ENCODE measurements at regions of chr12 and their contacts with region 1.

Region 1: GRCh38 chr12:21438643-21439042 is 1.2 kb downstream of the PYROXD1 start:
- DNase-seq: no peak
- H3K4me3 Mint-ChIP-seq: peak overlapping the region; percentile 78
- H3K27ac Mint-ChIP-seq: peak overlapping the region; percentile 57
- H3K4me1 Mint-ChIP-seq: peaks cover 50% of the 10 kb centered on the region
- H3K27me3 Mint-ChIP-seq: no peaks in the 10 kb centered on the region
- CTCF ChIP-seq: no peak

Region 2: DNA sequence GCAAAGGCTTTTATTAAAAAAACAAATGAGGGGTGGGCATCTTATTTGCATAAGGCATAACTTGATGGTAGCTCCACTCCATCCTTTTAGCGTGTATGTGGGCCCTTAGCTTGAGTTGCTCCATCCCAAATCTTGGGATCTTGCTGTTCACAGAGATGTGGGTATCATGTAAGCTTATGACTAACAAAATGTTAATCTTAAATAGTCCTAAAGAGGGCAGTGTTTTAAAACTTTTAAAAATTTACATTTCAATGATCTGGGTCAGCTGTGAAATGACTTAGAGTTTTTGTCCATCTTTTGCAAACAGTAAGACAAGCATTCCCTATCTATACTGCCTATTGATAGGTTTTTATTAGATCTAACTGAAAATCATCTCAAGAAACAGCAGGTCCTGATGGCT is 190.0 kb before region 1 on chr12:
- CTCF ChIA-PET with region 1: interaction called, 4 read pairs
- intact Hi-C with region 1: loop called (anchors 5 kb)
- DNase-seq: no peak
- H3K4me3 Mint-ChIP-seq: no peak overlapping the region
- H3K27ac Mint-ChIP-seq: no peak overlapping the region
- H3K4me1 Mint-ChIP-seq: no peaks in the 10 kb centered on the region
- H3K27me3 Mint-ChIP-seq: no peaks in the 10 kb centered on the region
- CTCF ChIP-seq: no peak

Region 3: GRCh38 chr12:21296751-21297406 is 141.8 kb before region 1 on chr12:
- CTCF ChIA-PET with region 1: no interaction called
- intact Hi-C with region 1: loop called (anchors 5 kb)
- DNase-seq: peak; percentile 8
- H3K4me3 Mint-ChIP-seq: no peak overlapping the region
- H3K27ac Mint-ChIP-seq: no peak overlapping the region
- H3K4me1 Mint-ChIP-seq: no peaks in the 10 kb centered on the region
- H3K27me3 Mint-ChIP-seq: no peaks in the 10 kb centered on the region
- CTCF ChIP-seq: peak; percentile 57

Region 4: GRCh38 chr12:21451529-21451928 is 12.9 kb after region 1 on chr12:
- CTCF ChIA-PET with region 1: interaction called, 7 read pairs
- intact Hi-C with region 1: loop called (anchors 1 kb)
- DNase-seq: no peak
- H3K4me3 Mint-ChIP-seq: no peak overlapping the region
- H3K27ac Mint-ChIP-seq: no peak overlapping the region
- H3K4me1 Mint-ChIP-seq: no peaks in the 10 kb centered on the region
- H3K27me3 Mint-ChIP-seq: no peaks in the 10 kb centered on the region
- CTCF ChIP-seq: no peak

Region 5: DNA sequence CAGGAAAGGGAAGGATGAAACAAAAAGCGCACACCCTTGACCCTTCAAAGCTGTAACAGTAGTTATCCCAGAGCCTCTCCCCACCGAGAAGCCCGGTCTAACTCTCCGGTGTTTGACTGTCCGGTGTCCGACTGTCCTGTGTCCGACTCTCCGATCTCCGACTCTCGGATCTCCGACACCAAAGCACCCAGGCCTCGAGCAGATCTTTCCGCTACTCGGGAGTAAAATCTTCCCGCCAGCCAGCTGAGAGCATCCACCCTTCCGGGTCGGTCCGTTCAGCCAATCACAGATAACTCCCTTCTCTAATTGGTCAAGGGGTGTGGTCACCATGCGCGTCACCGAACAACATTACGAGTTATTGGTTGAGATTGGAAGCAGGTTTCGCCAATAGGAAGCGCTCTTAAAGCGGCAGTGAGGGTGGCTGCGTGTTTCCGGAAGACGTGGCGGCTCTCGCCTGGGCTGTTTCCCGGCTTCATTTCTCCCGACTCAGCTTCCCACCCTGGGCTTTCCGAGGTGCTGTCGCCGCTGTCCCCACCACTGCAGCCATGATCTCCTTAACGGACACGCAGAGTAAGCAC is 62.8 kb after region 1 on chr12 and contains the starts of genes GOLT1B and RECQL:
- CTCF ChIA-PET with region 1: no interaction called
- intact Hi-C with region 1: loop called (anchors 5 kb)
- DNase-seq: peak; percentile 90
- H3K4me3 Mint-ChIP-seq: no peak within 1 kb of the TSS
- H3K27ac Mint-ChIP-seq: no peak within 1 kb of the TSS
- H3K4me1 Mint-ChIP-seq: peaks cover 9% of the 10 kb centered on the region
- H3K27me3 Mint-ChIP-seq: no peaks in the 10 kb centered on the region
- CTCF ChIP-seq: no peak
- total RNA-seq, gene GOLT1B: 30.7 and 37.1 TPM in 2 replicates
- total RNA-seq, gene RECQL: 28.0 and 32.1 TPM in 2 replicates

Region 6: GRCh38 chr12:21642707-21643389 is 204.2 kb after region 1 on chr12:
- CTCF ChIA-PET with region 1: no interaction called
- intact Hi-C with region 1: loop called (anchors 10 kb)
- DNase-seq: no peak
- H3K4me3 Mint-ChIP-seq: no peak overlapping the region
- H3K27ac Mint-ChIP-seq: no peak overlapping the region
- H3K4me1 Mint-ChIP-seq: peaks cover 83% of the 10 kb centered on the region
- H3K27me3 Mint-ChIP-seq: no peaks in the 10 kb centered on the region
- CTCF ChIP-seq: no peak

Measured in Calu3 (cell line).